GM12878 (cell line): ENCODE measurements at regions of chr12 and their contacts with region 1.

Region 1: DNA sequence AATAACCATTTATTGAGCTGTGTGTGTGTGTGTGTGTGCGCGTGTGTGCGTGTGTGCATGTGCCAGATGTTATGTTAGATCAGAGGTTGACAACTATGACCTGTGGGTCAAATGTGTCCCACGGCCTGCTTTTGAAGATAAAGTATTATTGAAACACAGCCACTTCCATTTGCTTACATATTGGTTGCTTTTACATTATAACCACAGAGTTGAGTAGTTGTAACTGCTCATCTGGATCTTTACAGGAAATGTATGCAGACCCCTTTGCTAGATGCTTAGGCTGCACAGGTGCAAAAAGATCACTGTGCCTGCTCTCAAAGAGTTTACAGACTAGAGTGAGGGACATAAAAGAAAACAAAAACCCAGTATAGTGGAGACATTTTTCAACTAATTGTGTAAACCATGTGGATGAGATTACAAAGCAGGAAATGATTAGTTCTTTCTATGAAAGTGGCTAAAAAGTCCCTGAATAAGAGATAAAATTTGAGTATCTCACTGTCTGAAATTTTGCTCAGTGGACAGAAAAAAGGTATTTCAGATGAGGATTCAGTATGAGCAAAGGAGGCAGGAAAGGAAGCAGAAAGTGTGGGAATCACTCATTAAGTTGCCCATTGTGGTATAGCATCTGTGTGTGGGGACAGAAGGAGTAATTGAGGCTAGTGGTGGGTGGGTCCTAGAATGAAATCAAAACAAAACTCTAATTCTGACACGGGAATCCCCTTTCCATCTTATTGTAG is 188.4 kb downstream of the PAH start:
- DNase-seq: peak; percentile 77
- ATAC-seq: peak; percentile 82
- H3K4me3 ChIP-seq: 0 out of 2 replicates have a peak overlapping the region, but pooled peaks have one; percentile 13
- H3K27ac ChIP-seq: peak overlapping the region; percentile 81
- H3K4me1 ChIP-seq: peaks cover 21% of the 10 kb centered on the region
- H3K27me3 ChIP-seq: no peaks in the 10 kb centered on the region
- CTCF ChIP-seq: no peak
- EP300 ChIP-seq: no peak
- POLR2A ChIP-seq: no peak
- RAD21 ChIP-seq: no peak

Region 2: GRCh38 chr12:101925361-101925760 is 803.3 kb before region 1 on chr12:
- CTCF ChIA-PET with region 1: no interaction called
- POLR2A ChIA-PET with region 1: no interaction called
- RAD21 ChIA-PET with region 1: no interaction called
- SMC1A ChIA-PET with region 1: no interaction called
- in situ Hi-C with region 1: loop called (anchors 10 kb)
- intact Hi-C with region 1: loop called (anchors 5 kb)
- DNase-seq: no peak
- ATAC-seq: no peak
- H3K4me3 ChIP-seq: no peak overlapping the region
- H3K27ac ChIP-seq: no peak overlapping the region
- H3K4me1 ChIP-seq: peaks cover 30% of the 10 kb centered on the region
- H3K27me3 ChIP-seq: no peaks in the 10 kb centered on the region
- CTCF ChIP-seq: no peak
- EP300 ChIP-seq: no peak
- POLR2A ChIP-seq: no peak
- RAD21 ChIP-seq: no peak